Posterior cingulate gyrus (tissue), 11 donors: ENCODE measurements at regions of chr11 and their contacts with region 1.

Region 1: GRCh38 chr11:46696212-46696558 is 4.2 kb downstream of the ARHGAP1 start:
- DNase-seq: peak; percentile 88 to 99 (median 96)

Region 2: GRCh38 chr11:46649180-46649738 is 46.9 kb before region 1 on chr11:
- intact Hi-C with region 1: loop called (anchors 1 kb)
- DNase-seq: peak in 6 of 10 donors; percentile 13 to 73 (median 40)